ENCODE measurements at regions of chr9 and their contacts with region 1.

Region 1: DNA sequence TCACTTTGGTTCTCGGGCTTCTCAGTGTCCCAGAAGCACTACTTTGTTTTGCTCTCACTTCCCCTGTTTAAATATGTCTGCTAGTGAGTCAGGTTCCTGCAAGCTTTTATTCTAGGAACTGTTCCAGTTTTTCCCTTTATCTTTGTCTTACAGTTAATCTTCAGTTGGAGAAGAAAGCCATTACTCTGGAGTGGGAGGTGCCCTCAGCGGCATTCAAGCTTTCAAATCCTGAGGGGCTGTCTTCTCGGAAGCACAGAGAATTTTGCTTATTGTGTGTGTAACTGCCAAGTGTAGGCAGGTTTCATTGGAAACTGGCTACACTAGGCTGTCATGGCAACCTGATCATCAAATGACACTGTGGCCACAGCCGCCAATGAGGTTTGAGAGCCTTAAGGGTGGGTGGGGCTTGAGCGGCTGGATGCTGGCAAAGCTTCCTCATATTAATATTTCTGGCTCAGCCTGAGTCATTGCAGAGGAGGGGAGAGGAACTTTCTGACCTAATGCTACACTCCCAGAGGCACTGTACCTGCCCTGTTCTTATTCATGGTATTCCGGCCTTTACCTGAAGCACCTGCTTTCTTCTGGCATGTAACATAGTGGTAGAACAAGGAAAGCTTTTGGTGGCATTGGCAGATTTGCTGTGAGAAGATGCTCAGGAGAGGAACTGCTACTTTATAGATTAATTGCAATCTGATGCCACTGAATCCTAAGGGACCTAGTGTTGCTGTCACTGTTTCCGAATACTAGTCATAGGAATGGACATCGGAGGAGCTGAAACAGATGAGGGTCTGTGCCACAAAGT is 26.3 kb downstream of the SLC25A25 start:
- DNase-seq: peak; percentile 96 to 99 (median 98)
- H3K4me3 ChIP-seq: peak overlapping the region in 4 of 7 experiments; percentile 28 to 73 (median 49)
- H3K27ac ChIP-seq: peak overlapping the region; percentile 94 to 98
- H3K4me1 ChIP-seq: peaks cover 8 to 62% (median 46%) of the 10 kb centered on the region in 4 experiments
- H3K27me3 ChIP-seq: no peaks in the 10 kb centered on the region

Region 2: GRCh38 chr9:128007566-128008138 is 86.7 kb before region 1 on chr9:
- CTCF ChIA-PET with region 1: no interaction called
- POLR2A ChIA-PET with region 1: no interaction called
- DNase-seq: peak; percentile 85 to 93 (median 93)
- H3K4me3 ChIP-seq: peak overlapping the region in 1 of 7 experiments; percentile 24
- H3K27ac ChIP-seq: no peak overlapping the region
- H3K4me1 ChIP-seq: peaks cover 5 to 43% (median 32%) of the 10 kb centered on the region in 4 experiments
- H3K27me3 ChIP-seq: no peaks in the 10 kb centered on the region

Region 3: GRCh38 chr9:128108784-128109709 is 14.7 kb after region 1 on chr9:
- CTCF ChIA-PET with region 1: interaction called, 47 read pairs
- POLR2A ChIA-PET with region 1: interaction called, 3 read pairs
- DNase-seq: no peak
- H3K4me3 ChIP-seq: no peak overlapping the region
- H3K27ac ChIP-seq: no peak overlapping the region
- H3K4me1 ChIP-seq: peaks cover 0 to 8% (median 5%) of the 10 kb centered on the region in 4 experiments
- H3K27me3 ChIP-seq: no peaks in the 10 kb centered on the region

Region 4: GRCh38 chr9:128117613-128118471 is 23.5 kb after region 1 on chr9:
- CTCF ChIA-PET with region 1: interaction called, 47 read pairs
- POLR2A ChIA-PET with region 1: interaction called, 3 read pairs
- DNase-seq: peak; percentile 88 to 94 (median 88)
- H3K4me3 ChIP-seq: peak overlapping the region in 2 of 7 experiments; percentile 11 to 45
- H3K27ac ChIP-seq: no peak overlapping the region
- H3K4me1 ChIP-seq: peaks cover 0 to 7% (median 3%) of the 10 kb centered on the region in 4 experiments
- H3K27me3 ChIP-seq: no peaks in the 10 kb centered on the region

Measured in common myeloid progenitor, CD34-positive (primary cell).